SK-MEL-5 (cell line): ENCODE measurements at regions of chr22 and their contacts with region 1.

Region 1: GRCh38 chr22:32660292-32660691 is 141.2 kb upstream of the TIMP3 start:
- DNase-seq: peak; percentile 93

Region 2: GRCh38 chr22:32796865-32797573 is 136.7 kb after region 1 on chr22:
- in situ Hi-C with region 1: loop called (anchors 25 kb)
- DNase-seq: peak; percentile 85